ENCODE measurements at regions of chr12 and their contacts with region 1.

Region 1: DNA sequence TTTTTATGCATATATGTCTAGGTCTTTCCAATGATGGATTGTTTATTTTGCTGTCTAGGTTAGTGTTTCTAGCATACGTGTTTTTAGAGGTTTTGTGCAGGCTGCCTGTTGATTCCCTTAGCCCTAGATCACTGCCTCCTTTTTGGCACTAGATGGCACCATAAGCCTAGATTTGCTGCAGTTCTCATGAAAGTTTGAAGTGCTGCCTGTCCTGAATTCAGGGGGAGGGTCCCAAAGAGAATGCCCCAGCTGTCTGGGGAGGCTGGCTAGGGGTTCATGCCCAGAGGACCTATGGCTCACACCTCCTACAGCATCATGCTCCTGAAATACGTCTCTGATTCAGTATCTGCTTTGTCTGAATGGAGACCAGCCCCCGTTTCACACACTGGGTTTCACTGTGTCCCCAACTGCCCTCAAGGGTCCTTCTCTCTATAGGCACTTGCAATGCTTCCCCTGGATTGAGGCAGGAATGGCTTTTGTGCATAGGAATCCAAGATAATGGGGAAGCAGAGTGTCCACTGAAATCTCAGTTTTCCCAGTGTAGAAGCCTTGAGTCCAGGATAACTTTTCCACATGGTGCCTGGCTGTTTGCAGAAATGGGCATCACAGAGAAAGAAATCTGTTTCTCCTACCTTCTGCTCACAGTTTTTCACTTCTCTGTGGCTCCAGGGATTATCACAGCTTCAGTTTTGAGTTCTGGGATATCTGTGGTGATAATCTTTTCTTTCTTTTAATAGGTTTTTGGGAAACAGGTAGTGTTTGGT is 14.2 kb upstream of the TXNRD1 start:
- DNase-seq: peak in 33 of 35 experiments; percentile 7 to 83 (median 32)
- ATAC-seq: peak; percentile 66 to 76 (median 71)
- H3K4me3 ChIP-seq: no peak overlapping the region
- H3K4me3 Mint-ChIP-seq: no peak overlapping the region
- H3K27ac ChIP-seq: no peak overlapping the region
- H3K27ac Mint-ChIP-seq: peak overlapping the region in 1 of 2 donors; percentile 55
- H3K4me1 ChIP-seq: no peaks in the 10 kb centered on the region
- H3K4me1 Mint-ChIP-seq: peaks cover 0 to 2% (median 2%) of the 10 kb centered on the region in 3 donors
- H3K27me3 ChIP-seq: peaks cover 0 to 9% of the 10 kb centered on the region in 2 experiments
- H3K27me3 Mint-ChIP-seq: peaks cover 3 to 7% of the 10 kb centered on the region in 2 donors

Region 2: DNA sequence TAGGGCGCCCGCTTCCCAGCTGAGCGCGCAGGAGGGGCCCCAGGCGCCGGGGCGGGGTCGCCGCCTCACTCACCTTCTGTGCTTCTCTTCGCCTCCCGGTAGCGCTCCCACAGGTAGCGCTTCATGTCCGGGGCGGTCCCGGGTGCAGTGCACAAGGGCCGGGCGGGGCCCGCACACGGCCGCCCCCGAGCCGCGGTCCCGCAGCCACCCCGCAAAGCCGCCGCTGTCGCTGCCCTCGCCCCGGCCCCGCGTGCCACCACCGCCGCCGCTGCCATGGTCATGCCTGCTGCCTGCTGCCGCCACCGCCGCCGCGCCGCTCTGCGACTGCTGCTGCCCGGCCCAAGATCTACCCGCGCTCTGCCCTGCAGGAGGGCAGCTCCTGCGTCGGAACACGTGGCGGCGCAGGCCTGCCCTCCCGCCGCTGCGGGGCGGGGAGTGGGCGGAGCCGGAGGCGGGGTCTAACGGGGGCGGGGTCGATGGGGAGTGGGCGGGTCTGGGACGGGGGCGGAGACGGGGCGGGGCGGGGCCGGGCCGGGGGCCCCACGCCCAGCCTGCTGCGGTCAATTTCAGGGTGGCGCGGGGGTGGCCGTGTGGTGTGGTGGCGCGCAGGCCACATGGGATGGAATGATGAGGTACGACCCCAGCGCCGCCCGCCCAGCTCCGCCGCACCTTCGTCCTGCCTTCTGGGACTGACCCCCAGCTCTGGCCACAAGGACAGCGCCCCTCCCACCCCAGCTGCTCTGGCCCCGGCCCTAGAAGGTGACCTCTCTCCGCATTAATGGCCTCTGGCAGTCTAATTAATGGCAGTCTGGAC is 360.3 kb before region 1 on chr12 and contains the start of gene NT5DC3:
- CTCF ChIA-PET with region 1: no interaction called
- POLR2A ChIA-PET with region 1: no interaction called
- DNase-seq: peak; percentile 52 to 88 (median 75)
- ATAC-seq: peak; percentile 90 to 93 (median 91)
- H3K4me3 ChIP-seq: peak within 1 kb of the TSS; percentile 53 to 75
- H3K4me3 Mint-ChIP-seq: peak within 1 kb of the TSS; percentile 78 to 87 (median 86)
- H3K27ac ChIP-seq: peak within 1 kb of the TSS; percentile 53
- H3K27ac Mint-ChIP-seq: peak within 1 kb of the TSS; percentile 52
- H3K4me1 ChIP-seq: peaks cover 5 to 17% of the 10 kb centered on the region in 2 experiments
- H3K4me1 Mint-ChIP-seq: peaks cover 16 to 17% (median 17%) of the 10 kb centered on the region in 3 donors
- H3K27me3 ChIP-seq: peaks cover 0 to 2% of the 10 kb centered on the region in 2 experiments
- H3K27me3 Mint-ChIP-seq: no peaks in the 10 kb centered on the region
- total RNA-seq, gene NT5DC3: 4.2 to 7.4 (median 6.3) TPM

Region 3: DNA sequence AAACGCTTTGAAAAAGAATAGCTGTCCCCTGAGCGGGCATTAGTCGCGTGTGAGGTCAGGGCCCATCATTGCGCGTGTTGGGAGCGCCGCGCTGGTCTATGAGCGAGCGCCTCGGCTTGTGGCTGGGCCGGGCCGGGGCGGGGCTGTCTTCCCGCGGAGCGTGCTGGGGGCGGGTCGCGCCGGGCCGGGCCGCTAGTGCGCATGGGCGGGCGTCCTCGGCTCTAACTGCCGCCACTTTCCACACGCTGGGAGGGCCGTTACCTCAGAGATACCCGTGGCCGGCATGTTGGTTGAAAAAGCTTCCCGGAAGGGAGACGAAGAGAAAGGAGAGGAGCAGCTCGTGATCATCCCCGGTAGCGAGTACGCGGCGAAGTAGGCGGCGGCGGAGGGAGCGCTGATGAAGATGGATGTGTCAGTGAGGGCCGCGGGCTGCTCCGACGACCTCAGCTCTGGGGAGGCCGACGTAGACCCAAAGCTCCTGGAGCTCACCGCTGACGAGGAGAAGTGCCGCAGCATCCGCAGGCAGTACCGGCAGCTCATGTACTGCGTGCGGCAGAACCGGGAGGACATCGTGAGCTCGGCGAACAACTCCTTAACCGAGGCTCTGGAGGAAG is 102.2 kb after region 1 on chr12 and contains the start of gene EID3:
- CTCF ChIA-PET with region 1: interaction called in 1 of 2 experiments, 3 read pairs
- POLR2A ChIA-PET with region 1: interaction called in 1 of 2 experiments, 11 read pairs
- DNase-seq: peak; percentile 78 to 95 (median 88)
- ATAC-seq: peak; percentile 93 to 98 (median 96)
- H3K4me3 ChIP-seq: peak within 1 kb of the TSS; percentile 56 to 74
- H3K4me3 Mint-ChIP-seq: peak within 1 kb of the TSS; percentile 90 to 96 (median 91)
- H3K27ac ChIP-seq: peak within 1 kb of the TSS; percentile 80
- H3K27ac Mint-ChIP-seq: peak within 1 kb of the TSS; percentile 93 to 95
- H3K4me1 ChIP-seq: peaks cover 14 to 17% of the 10 kb centered on the region in 2 experiments
- H3K4me1 Mint-ChIP-seq: peaks cover 60 to 61% (median 61%) of the 10 kb centered on the region in 3 donors
- H3K27me3 ChIP-seq: no peaks in the 10 kb centered on the region
- H3K27me3 Mint-ChIP-seq: no peaks in the 10 kb centered on the region
- total RNA-seq, gene EID3: 5.6 to 13.0 (median 6.0) TPM

Region 4: DNA sequence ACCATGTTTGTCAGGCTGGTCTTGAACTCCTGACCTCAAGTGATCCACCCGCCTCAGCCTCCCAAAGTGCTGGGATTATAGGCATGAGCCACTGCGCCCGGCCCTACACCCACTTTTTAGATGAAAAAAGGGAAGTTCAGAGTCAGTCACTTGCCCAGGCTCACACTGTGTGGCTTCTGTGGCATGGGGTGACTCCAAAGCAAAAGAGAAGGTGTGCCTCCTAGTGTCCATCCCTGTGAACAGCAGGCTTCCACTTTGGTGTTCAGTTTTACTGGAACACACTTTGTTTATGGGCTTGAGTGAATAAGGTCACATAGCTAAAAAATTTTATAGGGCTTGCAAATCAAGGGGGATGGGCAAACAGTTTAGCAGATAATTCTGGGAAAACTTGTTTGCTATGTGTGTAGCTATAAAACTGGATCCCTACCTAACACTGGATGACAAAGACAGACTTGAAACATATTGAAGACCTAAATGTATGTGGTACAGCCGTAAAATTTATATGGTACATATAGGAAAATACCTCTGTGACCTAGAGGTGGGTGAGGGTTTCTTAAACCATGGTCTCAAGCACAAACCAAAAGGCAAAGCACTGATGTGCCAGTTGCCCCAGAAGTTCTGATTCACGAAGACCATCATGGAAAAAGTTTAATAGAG is 157.1 kb after region 1 on chr12:
- CTCF ChIA-PET with region 1: interaction called, 5 to 16 read pairs
- POLR2A ChIA-PET with region 1: no interaction called
- DNase-seq: peak; percentile 15 to 80 (median 57)
- ATAC-seq: peak; percentile 83 to 91 (median 89)
- H3K4me3 ChIP-seq: no peak overlapping the region
- H3K4me3 Mint-ChIP-seq: no peak overlapping the region
- H3K27ac ChIP-seq: no peak overlapping the region
- H3K27ac Mint-ChIP-seq: no peak overlapping the region
- H3K4me1 ChIP-seq: no peaks in the 10 kb centered on the region
- H3K4me1 Mint-ChIP-seq: peaks cover 0 to 2% (median 0%) of the 10 kb centered on the region in 3 donors
- H3K27me3 ChIP-seq: no peaks in the 10 kb centered on the region
- H3K27me3 Mint-ChIP-seq: no peaks in the 10 kb centered on the region

Measured in T-cell (primary cell).